T-cell (primary cell): ENCODE measurements at regions of chr4 and their contacts with region 1.

Region 1: GRCh38 chr4:152500800-152501434 is 35.0 kb downstream of the FBXW7 start:
- DNase-seq: peak in 29 of 35 experiments; percentile 13 to 91 (median 44)
- ATAC-seq: peak; percentile 69 to 81 (median 79)
- H3K4me3 ChIP-seq: no peak overlapping the region
- H3K4me3 Mint-ChIP-seq: no peak overlapping the region
- H3K27ac ChIP-seq: no peak overlapping the region
- H3K27ac Mint-ChIP-seq: peak overlapping the region; percentile 56 to 70
- H3K4me1 ChIP-seq: peaks cover 0 to under 1% of the 10 kb centered on the region in 2 experiments
- H3K4me1 Mint-ChIP-seq: peaks cover 44 to 58% (median 49%) of the 10 kb centered on the region in 3 donors
- H3K27me3 ChIP-seq: no peaks in the 10 kb centered on the region
- H3K27me3 Mint-ChIP-seq: no peaks in the 10 kb centered on the region

Region 2: DNA sequence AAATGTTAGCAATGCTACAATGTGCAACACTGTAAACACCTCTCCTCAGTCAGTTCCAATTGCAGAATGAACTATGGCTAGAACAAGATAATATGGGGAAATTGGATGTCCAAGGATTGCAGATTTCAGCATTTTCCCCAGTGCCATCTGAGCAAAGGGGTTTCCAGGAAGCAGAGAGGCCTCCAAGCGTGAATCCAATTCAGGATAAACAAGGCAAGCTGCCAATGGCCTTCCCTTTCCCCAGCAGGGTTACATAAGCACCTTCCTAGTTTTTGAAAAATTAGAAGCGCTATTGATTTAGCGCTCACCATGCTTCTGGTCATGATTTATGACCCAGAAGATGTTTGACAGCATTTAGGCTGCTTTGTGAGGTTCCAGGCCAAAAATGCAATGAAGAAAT is 517.1 kb before region 1 on chr4:
- CTCF ChIA-PET with region 1: no interaction called
- POLR2A ChIA-PET with region 1: no interaction called
- DNase-seq: no peak
- ATAC-seq: no peak
- H3K4me3 ChIP-seq: no peak overlapping the region
- H3K4me3 Mint-ChIP-seq: no peak overlapping the region
- H3K27ac ChIP-seq: no peak overlapping the region
- H3K27ac Mint-ChIP-seq: no peak overlapping the region
- H3K4me1 ChIP-seq: no peaks in the 10 kb centered on the region
- H3K4me1 Mint-ChIP-seq: peaks cover 2 to 4% (median 2%) of the 10 kb centered on the region in 3 donors
- H3K27me3 ChIP-seq: no peaks in the 10 kb centered on the region
- H3K27me3 Mint-ChIP-seq: no peaks in the 10 kb centered on the region

Region 3: DNA sequence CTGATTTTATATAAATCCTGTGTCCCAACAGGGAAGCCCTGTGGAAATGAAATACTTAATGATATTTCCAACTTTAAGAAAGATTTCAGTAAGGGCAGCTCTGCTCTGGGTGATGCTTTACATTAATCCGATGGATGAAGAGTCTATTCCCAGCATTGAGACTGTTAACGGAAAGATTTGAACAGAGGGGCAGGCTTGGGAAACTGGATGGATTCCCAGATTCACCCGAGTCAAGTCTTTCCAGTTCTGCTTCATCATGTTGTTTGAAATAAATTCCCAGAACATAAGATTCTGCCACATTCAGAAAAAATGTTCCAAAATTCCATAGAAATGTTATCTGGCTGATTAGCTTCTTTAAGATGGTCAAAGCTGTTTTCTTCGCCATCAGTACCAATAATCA is 211.0 kb before region 1 on chr4:
- CTCF ChIA-PET with region 1: no interaction called
- POLR2A ChIA-PET with region 1: no interaction called
- DNase-seq: no peak
- ATAC-seq: no peak
- H3K4me3 ChIP-seq: no peak overlapping the region
- H3K4me3 Mint-ChIP-seq: no peak overlapping the region
- H3K27ac ChIP-seq: no peak overlapping the region
- H3K27ac Mint-ChIP-seq: no peak overlapping the region
- H3K4me1 ChIP-seq: no peaks in the 10 kb centered on the region
- H3K4me1 Mint-ChIP-seq: no peaks in the 10 kb centered on the region
- H3K27me3 ChIP-seq: no peaks in the 10 kb centered on the region
- H3K27me3 Mint-ChIP-seq: no peaks in the 10 kb centered on the region

Region 4: DNA sequence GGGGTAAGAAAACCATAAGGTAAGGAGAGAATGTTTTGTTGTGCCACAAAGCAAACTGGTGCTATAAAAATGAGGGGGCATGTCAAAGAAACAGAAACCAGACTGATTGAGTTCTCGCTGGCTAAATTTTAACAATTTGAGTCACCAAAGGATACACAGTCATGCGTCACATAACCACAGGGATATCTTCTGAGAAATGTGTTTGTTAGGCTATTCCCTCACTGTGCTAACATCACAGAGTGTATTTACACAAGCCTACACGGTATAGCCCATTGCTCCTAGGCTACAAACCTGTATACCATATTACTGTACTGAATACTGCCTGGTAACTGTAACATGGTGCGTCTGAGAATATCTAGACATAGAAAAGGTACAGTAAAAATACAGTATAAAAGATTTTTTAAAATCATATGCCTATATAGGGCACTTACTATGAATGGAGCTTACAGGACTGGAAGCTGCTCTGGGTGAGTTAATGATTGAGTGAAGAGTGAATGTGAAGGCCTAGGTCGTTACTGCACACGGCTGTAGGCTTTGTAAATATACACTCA is 15.1 kb before region 1 on chr4:
- CTCF ChIA-PET with region 1: interaction called, 3 to 21 read pairs
- POLR2A ChIA-PET with region 1: interaction called in 1 of 2 experiments, 5 read pairs
- DNase-seq: peak in 13 of 35 experiments; percentile 1 to 66 (median 19)
- ATAC-seq: peak; percentile 82 to 97 (median 93)
- H3K4me3 ChIP-seq: no peak overlapping the region
- H3K4me3 Mint-ChIP-seq: peak overlapping the region in 2 of 3 donors; percentile 15 to 29
- H3K27ac ChIP-seq: no peak overlapping the region
- H3K27ac Mint-ChIP-seq: peak overlapping the region; percentile 1 to 18
- H3K4me1 ChIP-seq: peaks cover 0 to 3% of the 10 kb centered on the region in 2 experiments
- H3K4me1 Mint-ChIP-seq: peaks cover 45 to 59% (median 55%) of the 10 kb centered on the region in 3 donors
- H3K27me3 ChIP-seq: no peaks in the 10 kb centered on the region
- H3K27me3 Mint-ChIP-seq: no peaks in the 10 kb centered on the region

Region 5: GRCh38 chr4:152524427-152524826 is 23.5 kb after region 1 on chr4:
- CTCF ChIA-PET with region 1: interaction called, 6 to 21 read pairs
- POLR2A ChIA-PET with region 1: interaction called in 1 of 2 experiments, 4 read pairs
- DNase-seq: peak in 1 of 35 experiments; percentile 33
- ATAC-seq: peak in 3 of 4 experiments; percentile 30 to 75 (median 38)
- H3K4me3 ChIP-seq: no peak overlapping the region
- H3K4me3 Mint-ChIP-seq: peak overlapping the region; percentile 7 to 40 (median 15)
- H3K27ac ChIP-seq: no peak overlapping the region
- H3K27ac Mint-ChIP-seq: peak overlapping the region; percentile 81
- H3K4me1 ChIP-seq: peaks cover 6% of the 10 kb centered on the region in 2 experiments
- H3K4me1 Mint-ChIP-seq: peaks cover 74 to 77% (median 76%) of the 10 kb centered on the region in 3 donors
- H3K27me3 ChIP-seq: no peaks in the 10 kb centered on the region
- H3K27me3 Mint-ChIP-seq: no peaks in the 10 kb centered on the region

Region 6: GRCh38 chr4:152554742-152555141 is 53.8 kb after region 1 on chr4:
- CTCF ChIA-PET with region 1: interaction called in 1 of 2 experiments, 20 read pairs
- POLR2A ChIA-PET with region 1: interaction called in 1 of 2 experiments, 5 read pairs
- DNase-seq: no peak
- ATAC-seq: no peak
- H3K4me3 ChIP-seq: no peak overlapping the region
- H3K4me3 Mint-ChIP-seq: peak overlapping the region in 1 of 3 donors; percentile 73
- H3K27ac ChIP-seq: peak overlapping the region; percentile 87
- H3K27ac Mint-ChIP-seq: peak overlapping the region; percentile 92 to 95
- H3K4me1 ChIP-seq: peaks cover 19 to 27% of the 10 kb centered on the region in 2 experiments
- H3K4me1 Mint-ChIP-seq: peaks cover 42 to 59% (median 53%) of the 10 kb centered on the region in 3 donors
- H3K27me3 ChIP-seq: no peaks in the 10 kb centered on the region
- H3K27me3 Mint-ChIP-seq: no peaks in the 10 kb centered on the region

Region 7: DNA sequence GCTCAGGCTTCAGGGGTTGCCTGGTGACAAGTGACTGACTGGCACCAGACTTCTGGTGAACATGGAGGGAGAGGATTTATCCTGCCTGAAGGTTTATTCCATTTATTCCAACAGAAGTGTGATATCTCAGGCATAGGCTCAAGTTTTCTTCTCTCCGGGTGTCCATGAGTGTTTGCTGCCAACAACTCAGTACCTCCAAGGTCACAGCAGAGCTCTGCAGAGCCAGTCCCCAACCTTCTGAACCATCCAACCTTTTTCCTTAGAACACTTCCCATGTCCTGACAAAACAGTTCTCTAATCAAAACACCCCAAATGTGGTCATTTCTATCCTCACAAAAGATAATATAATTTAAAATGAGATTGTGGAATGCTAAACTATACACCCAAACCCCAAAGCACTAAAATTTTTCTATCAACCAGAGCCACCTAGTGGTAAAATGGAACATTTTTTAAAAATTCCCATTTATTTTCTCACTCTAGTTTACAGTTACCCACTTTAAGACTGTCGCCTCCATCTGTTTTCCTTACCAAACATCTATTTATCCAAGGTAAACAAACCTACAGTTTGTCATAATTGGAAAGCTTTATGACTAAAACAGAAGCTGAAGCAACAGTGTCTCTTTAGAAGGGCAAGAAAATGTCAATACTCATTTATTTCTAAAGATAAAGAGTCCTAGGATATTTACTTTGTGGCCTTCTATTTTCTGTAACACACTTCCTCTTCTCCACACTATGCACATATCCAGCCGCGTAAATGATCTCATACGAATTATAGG is 139.3 kb after region 1 on chr4:
- CTCF ChIA-PET with region 1: interaction called, 104 to 204 read pairs
- POLR2A ChIA-PET with region 1: interaction called in 1 of 2 experiments, 4 read pairs
- DNase-seq: peak in 1 of 35 experiments; percentile 44
- ATAC-seq: no peak
- H3K4me3 ChIP-seq: no peak overlapping the region
- H3K4me3 Mint-ChIP-seq: no peak overlapping the region
- H3K27ac ChIP-seq: no peak overlapping the region
- H3K27ac Mint-ChIP-seq: peak overlapping the region; percentile 11 to 12
- H3K4me1 ChIP-seq: peaks cover 3 to 12% of the 10 kb centered on the region in 2 experiments
- H3K4me1 Mint-ChIP-seq: peaks cover 4 to 31% (median 25%) of the 10 kb centered on the region in 3 donors
- H3K27me3 ChIP-seq: no peaks in the 10 kb centered on the region
- H3K27me3 Mint-ChIP-seq: no peaks in the 10 kb centered on the region

Region 8: GRCh38 chr4:152735396-152735859 is 234.5 kb after region 1 on chr4:
- CTCF ChIA-PET with region 1: interaction called, 5 to 12 read pairs
- POLR2A ChIA-PET with region 1: no interaction called
- DNase-seq: peak in 1 of 35 experiments; percentile 45
- ATAC-seq: no peak
- H3K4me3 ChIP-seq: no peak overlapping the region
- H3K4me3 Mint-ChIP-seq: no peak overlapping the region
- H3K27ac ChIP-seq: no peak overlapping the region
- H3K27ac Mint-ChIP-seq: no peak overlapping the region
- H3K4me1 ChIP-seq: no peaks in the 10 kb centered on the region
- H3K4me1 Mint-ChIP-seq: peaks cover 2 to 4% (median 3%) of the 10 kb centered on the region in 3 donors
- H3K27me3 ChIP-seq: no peaks in the 10 kb centered on the region
- H3K27me3 Mint-ChIP-seq: peaks cover 3% of the 10 kb centered on the region in 2 donors